Activated CD4-positive, alpha-beta T cell treated with anti-CD3 and anti-CD28 coated beads, Interleukin-2, amount 10 ng/mL, durations not matched to agents 7 days and 5 days (primary cell): ENCODE measurements at regions of chr1 and their contacts with region 1.

Region 1: DNA sequence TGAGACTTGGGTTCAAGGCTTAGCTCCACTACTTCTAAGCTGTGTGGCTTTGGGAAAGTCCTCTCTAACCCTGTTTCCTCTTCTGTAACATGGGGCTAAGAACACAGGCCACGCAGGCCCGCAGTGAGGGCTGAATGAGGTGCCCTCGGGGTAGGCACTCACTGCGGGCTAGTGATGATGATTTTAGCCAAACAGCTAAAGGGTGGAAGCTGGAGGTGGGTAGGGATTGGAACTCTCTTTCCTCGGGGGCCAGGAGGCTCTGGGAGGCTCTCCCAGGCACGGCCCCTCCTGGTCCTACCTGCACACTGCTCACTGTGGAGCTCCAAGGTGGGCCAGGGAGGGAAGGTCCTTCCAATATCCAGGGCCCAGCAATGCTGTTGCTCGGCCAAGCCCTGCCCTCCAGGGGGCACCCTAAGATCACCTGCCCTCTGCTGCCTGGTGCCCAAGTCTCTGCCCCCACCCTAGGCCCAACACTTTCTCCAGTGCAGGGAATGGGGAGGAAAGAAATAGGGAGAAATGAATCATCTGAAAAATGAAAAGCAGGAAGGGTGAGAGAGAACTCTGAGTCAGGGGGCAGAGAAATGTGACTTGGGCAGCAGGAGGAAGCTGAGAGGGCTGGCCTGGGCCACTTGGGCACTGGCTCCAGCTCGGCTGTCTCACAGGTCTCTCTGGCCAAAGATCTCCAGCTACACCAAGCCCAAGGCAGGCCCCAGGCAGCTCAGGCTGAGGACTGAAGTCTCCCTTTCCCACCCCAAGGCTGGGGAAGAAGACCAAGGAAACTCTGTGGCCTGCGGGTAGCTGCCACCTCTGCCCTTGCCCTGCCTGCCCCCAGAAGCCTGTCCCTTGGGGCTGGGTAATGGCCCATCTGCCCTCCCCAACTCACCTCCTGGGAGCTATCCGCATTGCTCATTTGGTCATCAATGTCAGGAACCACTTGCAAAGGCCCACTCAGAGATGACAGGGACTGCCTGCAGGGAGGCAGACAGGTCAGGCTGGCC is 19.3 kb upstream of the EVA1B start:
- DNase-seq: peak; percentile 64
- H3K4me3 Mint-ChIP-seq: no peak overlapping the region
- H3K27ac Mint-ChIP-seq: peak overlapping the region; percentile 66
- H3K4me1 Mint-ChIP-seq: peaks cover 20% of the 10 kb centered on the region
- H3K27me3 Mint-ChIP-seq: no peaks in the 10 kb centered on the region

Region 2: GRCh38 chr1:35406103-35406502 is 936.7 kb before region 1 on chr1:
- CTCF ChIA-PET with region 1: no interaction called
- POLR2A ChIA-PET with region 1: no interaction called
- DNase-seq: no peak
- H3K4me3 Mint-ChIP-seq: no peak overlapping the region
- H3K27ac Mint-ChIP-seq: no peak overlapping the region
- H3K4me1 Mint-ChIP-seq: no peaks in the 10 kb centered on the region
- H3K27me3 Mint-ChIP-seq: no peaks in the 10 kb centered on the region

Region 3: DNA sequence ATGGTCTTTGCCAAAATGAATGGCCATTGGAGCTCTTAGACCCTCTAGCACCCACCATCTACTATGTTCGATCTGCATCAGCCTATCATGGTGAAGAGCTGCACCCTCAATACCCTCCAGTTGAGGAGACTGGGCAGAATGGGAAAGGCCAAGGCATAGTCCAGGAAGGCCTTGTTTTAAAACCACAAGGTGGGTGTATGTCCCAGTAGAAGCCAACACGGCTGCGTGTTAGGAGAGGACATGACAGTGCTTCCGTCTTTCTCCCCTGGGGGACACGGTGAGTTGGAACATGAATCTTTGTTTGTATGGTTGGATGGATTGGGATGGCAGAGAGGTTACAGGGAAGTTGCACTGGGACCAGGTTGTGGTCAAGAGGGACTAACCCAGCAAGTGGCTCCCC is 55.2 kb before region 1 on chr1:
- CTCF ChIA-PET with region 1: no interaction called
- POLR2A ChIA-PET with region 1: no interaction called
- DNase-seq: no peak
- H3K4me3 Mint-ChIP-seq: no peak overlapping the region
- H3K27ac Mint-ChIP-seq: no peak overlapping the region
- H3K4me1 Mint-ChIP-seq: peaks cover 14% of the 10 kb centered on the region
- H3K27me3 Mint-ChIP-seq: no peaks in the 10 kb centered on the region

Region 4: DNA sequence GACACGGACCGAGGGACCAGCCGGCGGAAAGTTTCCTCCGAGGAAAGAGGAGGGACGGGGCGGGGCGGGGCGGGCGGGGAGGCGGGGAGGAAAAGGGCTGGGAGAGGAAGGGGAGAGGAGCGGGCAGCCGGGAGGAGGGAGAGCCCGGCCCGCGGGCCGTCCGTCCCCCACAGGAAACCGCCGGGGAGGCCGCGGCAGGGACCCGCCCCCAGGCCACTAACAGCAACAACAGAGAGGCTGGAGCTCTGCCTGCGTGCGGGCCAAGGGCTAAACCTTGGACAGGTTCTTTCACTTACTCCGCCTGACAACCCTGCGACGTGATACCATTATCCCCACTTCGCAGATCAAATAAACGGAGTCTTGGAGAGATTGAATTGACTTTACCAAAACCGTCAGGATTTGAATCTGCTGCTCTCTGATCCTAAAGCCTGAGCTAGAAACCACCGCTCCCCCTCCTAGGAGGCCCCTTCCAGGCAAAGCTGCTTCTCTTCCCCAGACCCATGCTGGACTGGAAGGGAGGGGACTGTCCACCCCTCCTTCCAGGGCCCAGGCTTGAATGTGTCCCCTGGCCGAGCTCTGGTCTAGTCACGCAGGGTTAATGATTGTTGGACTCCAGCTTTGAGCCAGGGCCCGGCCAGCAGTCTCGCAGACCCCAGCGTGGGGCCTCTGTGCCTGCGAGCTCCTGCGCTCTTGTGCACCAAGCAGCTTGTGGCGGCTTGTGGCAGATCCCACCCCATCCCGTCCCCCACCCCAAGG is 19.0 kb before region 1 on chr1 and contains the start of gene EVA1B:
- CTCF ChIA-PET with region 1: interaction called, 14 read pairs
- POLR2A ChIA-PET with region 1: no interaction called
- DNase-seq: peak; percentile 59
- H3K4me3 Mint-ChIP-seq: peak within 1 kb of the TSS; percentile 71
- H3K27ac Mint-ChIP-seq: peak within 1 kb of the TSS; percentile 64
- H3K4me1 Mint-ChIP-seq: peaks cover 43% of the 10 kb centered on the region
- H3K27me3 Mint-ChIP-seq: peaks cover 16% of the 10 kb centered on the region
- total RNA-seq, gene EVA1B: 7.3 to 9.3 TPM

Region 5: GRCh38 chr1:36369061-36369861 is 26.5 kb after region 1 on chr1:
- CTCF ChIA-PET with region 1: interaction called, 10 read pairs
- POLR2A ChIA-PET with region 1: interaction called, 3 read pairs
- DNase-seq: peak; percentile 88
- H3K4me3 Mint-ChIP-seq: no peak overlapping the region
- H3K27ac Mint-ChIP-seq: peak overlapping the region; percentile 52
- H3K4me1 Mint-ChIP-seq: peaks cover 76% of the 10 kb centered on the region
- H3K27me3 Mint-ChIP-seq: no peaks in the 10 kb centered on the region